GM10248 (cell line): ENCODE measurements at regions of chr15 and their contacts with region 1.

Region 1: GRCh38 chr15:59399465-59400102 is 26.9 kb upstream of the MYO1E start:
- DNase-seq: peak; percentile 74
- CTCF ChIP-seq: no peak

Region 2: DNA sequence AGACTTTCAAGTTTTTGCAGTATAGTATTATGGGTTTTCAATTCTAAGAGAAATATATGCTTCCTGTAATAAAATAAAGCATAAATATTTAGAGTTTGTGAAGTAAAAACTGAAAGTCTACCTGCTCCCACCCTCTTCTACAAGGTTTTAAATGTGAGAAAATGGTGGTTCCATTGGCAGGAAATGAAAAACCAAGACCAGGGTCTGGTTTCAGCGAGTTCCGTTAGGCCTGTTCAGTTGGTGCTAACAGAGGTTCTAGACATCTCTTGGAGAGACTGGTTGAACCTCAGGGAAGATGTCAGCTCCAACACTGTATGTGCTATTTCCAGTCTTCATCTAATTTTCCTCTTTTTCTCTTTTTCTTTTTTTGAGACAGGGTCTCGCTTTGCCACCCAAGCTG is 15.1 kb before region 1 on chr15:
- CTCF ChIA-PET with region 1: interaction called, 16 read pairs
- POLR2A ChIA-PET with region 1: no interaction called
- DNase-seq: peak; percentile 46
- CTCF ChIP-seq: no peak